Activated CD8-positive, alpha-beta memory T cell treated with anti-CD3 and anti-CD28 coated beads, Interleukin-2, amount 10 ng/mL, durations not matched to agents 7 days and 5 days (primary cell): ENCODE measurements at regions of chr2 and their contacts with region 1.

Region 1: DNA sequence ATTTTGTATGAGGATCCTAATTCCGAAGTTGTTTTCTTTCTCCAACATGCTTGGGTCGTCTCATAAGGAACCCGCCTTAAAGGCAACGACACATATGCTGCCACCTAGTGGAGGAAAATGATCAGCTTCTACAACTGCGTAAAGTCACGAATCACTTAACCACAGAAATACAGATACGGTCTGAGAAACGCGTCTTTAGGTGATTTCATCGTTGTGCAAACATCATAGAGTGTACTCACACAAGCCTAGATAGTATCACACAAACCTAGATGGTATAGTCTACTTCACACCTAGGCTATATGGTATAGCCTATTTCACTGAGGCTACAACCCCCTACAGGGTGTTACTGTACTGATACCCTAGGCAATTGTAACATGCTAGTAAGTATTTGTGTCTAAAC is 13.1 kb downstream of the GNLY start:
- DNase-seq: peak; percentile 85
- ATAC-seq: peak; percentile 82
- H3K4me3 Mint-ChIP-seq: no peak overlapping the region
- H3K27ac Mint-ChIP-seq: peak overlapping the region; percentile 77
- H3K4me1 Mint-ChIP-seq: peaks cover 69% of the 10 kb centered on the region
- H3K27me3 Mint-ChIP-seq: peaks cover 17% of the 10 kb centered on the region

Region 2: DNA sequence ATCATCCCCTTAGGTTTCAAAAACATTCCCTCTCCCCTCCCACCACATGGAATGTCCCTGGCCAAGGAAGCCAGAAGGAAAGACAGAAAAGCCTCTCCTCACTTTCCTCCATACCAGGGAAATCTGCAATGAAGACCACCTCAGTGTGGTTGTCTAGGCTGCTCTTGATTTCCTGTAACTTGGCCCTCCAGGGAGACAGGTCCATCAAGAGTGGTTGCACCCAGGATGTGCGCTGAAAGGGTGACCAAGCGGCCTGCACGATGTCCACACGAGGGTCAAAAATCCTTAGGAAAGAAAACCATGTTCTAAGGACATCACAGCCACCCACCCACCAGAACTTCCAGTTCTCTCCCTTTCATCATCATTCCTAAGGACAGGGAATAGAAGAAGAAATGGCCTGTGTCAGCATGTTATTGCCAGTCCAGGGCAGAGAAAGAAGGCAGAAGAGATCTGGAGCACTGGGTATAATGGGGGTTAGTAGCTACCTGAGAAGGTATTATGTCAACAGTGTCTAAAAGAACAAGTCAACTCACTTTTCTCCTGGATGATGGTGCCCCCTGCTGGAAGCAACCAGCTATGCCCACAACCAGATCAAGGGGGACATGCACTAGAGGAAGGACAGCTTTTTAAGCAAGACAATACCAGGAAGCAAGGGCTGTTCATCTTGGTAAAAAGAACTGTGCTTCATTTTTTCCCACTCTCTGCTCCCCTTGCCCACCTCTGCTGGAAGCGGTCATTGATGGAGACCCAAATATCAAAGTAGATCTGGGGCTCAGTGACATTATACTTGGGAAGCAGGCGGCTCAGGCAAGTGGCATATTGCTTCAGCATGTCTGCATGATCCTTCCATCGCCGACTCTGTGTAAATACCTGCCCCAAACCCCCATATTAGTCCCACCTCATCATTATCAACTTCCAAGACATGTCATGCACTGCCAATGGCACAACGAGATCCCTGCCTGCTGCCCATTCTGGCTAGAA is 155.3 kb before region 1 on chr2:
- CTCF ChIA-PET with region 1: no interaction called
- DNase-seq: peak; percentile 92
- ATAC-seq: peak; percentile 83
- H3K4me3 Mint-ChIP-seq: no peak overlapping the region
- H3K27ac Mint-ChIP-seq: peak overlapping the region; percentile 0
- H3K4me1 Mint-ChIP-seq: no peaks in the 10 kb centered on the region
- H3K27me3 Mint-ChIP-seq: no peaks in the 10 kb centered on the region

Region 3: DNA sequence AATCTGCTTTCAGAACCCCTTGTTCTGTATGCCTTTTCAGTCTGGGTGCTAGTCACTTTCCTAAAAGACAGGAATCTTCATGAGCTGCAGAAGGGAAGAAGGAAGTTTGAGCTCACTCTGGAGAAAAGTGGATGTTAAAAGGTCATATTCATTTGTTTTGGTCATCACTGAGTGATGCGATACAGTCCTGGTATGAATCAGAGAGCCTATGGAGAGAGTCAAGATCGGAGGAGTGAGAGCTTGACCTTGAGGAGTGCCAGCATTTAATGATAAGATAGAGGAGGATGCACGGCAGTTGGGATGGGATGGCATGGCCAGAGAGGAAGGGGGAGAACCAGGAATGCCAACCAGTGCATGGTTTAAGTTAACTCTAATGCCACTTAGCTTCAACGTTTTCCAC is 71.7 kb before region 1 on chr2:
- CTCF ChIA-PET with region 1: interaction called, 28 read pairs
- DNase-seq: no peak
- ATAC-seq: no peak
- H3K4me3 Mint-ChIP-seq: no peak overlapping the region
- H3K27ac Mint-ChIP-seq: no peak overlapping the region
- H3K4me1 Mint-ChIP-seq: peaks cover 13% of the 10 kb centered on the region
- H3K27me3 Mint-ChIP-seq: no peaks in the 10 kb centered on the region

Region 4: GRCh38 chr2:85648619-85649018 is 58.7 kb before region 1 on chr2:
- CTCF ChIA-PET with region 1: interaction called, 15 read pairs
- DNase-seq: peak; percentile 45
- ATAC-seq: peak; percentile 60
- H3K4me3 Mint-ChIP-seq: no peak overlapping the region
- H3K27ac Mint-ChIP-seq: peak overlapping the region; percentile 22
- H3K4me1 Mint-ChIP-seq: peaks cover 5% of the 10 kb centered on the region
- H3K27me3 Mint-ChIP-seq: no peaks in the 10 kb centered on the region

Region 5: GRCh38 chr2:85678794-85679672 is 28.3 kb before region 1 on chr2:
- CTCF ChIA-PET with region 1: interaction called, 189 read pairs
- DNase-seq: peak; percentile 84
- ATAC-seq: peak; percentile 88
- H3K4me3 Mint-ChIP-seq: no peak overlapping the region
- H3K27ac Mint-ChIP-seq: peak overlapping the region; percentile 34
- H3K4me1 Mint-ChIP-seq: peaks cover 32% of the 10 kb centered on the region
- H3K27me3 Mint-ChIP-seq: peaks cover 12% of the 10 kb centered on the region

Region 6: GRCh38 chr2:85694052-85695025 is 13.0 kb before region 1 on chr2 and contains the start of gene GNLY:
- CTCF ChIA-PET with region 1: interaction called, 70 read pairs
- DNase-seq: peak; percentile 50
- ATAC-seq: peak; percentile 24
- H3K4me3 Mint-ChIP-seq: peak within 1 kb of the TSS; percentile 49
- H3K27ac Mint-ChIP-seq: peak within 1 kb of the TSS; percentile 69
- H3K4me1 Mint-ChIP-seq: peaks cover 44% of the 10 kb centered on the region
- H3K27me3 Mint-ChIP-seq: peaks cover 7% of the 10 kb centered on the region
- total RNA-seq, gene GNLY: 364 to 1,915 TPM

Region 7: DNA sequence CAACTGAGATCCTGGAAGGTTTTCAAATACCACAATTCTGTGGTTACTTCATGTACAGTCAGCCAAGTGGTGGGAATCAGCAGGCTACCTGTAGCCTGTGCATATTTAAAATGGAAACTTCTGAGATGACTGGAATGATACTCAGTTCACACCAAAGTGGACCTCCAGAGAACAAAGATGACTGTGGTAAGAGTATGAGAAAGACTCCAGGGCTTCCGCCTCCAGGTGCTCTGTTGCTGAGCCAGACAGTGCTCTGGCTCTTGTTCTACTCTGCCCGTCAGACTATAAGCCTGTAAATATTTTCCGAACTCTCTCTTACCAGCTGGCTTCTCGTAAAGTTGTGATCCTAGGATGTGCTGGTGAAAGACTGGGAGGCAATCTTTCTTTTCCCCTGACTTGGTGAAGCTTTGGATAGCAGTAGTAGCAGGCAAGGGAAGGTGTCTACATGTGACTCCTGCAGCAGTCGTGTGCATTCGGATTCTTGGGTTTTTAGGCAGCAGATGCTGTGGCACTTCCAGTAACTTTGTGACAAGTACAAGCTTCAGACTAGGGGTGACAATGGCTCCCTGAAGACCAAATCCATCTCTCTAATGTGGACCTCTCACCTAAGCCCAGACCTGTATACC is 158.3 kb after region 1 on chr2:
- CTCF ChIA-PET with region 1: no interaction called
- DNase-seq: peak; percentile 56
- ATAC-seq: peak; percentile 63
- H3K4me3 Mint-ChIP-seq: no peak overlapping the region
- H3K27ac Mint-ChIP-seq: peak overlapping the region; percentile 14
- H3K4me1 Mint-ChIP-seq: peaks cover 65% of the 10 kb centered on the region
- H3K27me3 Mint-ChIP-seq: no peaks in the 10 kb centered on the region